ENCODE measurements at regions of chr16 and their contacts with region 1.

Region 1: DNA sequence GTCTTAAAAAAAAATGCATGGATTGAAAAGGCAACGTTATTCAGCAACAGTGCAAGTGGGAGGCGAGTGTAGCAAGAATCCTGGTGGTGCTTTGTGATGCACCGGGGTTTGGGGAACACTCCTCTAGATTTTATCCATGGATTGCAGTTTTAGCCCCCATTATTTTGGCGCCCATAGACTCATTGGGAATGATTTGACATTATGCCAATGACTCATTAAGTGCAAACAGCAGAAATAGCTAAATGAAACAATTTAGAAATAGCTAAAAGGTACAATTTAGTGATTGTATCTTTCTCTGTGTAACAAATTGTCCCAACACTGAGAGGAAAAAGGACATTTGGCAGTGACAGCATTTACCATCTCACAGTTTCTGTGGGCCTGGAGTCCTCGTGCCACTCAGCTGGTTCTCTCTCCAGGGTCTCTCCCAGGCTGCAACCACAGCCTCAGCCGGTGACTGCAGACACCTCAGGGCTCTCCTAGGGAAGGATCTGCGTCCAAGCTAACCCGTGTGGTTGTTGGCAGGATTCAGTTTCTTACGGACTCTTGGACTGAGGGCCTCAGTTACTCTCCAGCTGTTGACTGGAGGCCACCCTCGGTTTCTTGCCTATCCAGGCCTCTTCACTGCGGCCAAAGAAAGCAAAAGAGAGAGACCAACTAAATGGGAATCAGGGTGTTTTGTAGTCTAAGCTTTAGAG is 398.7 kb downstream of the SNX29 start:
- DNase-seq: peak in 1 of 10 donors; percentile 76

Region 2: GRCh38 chr16:12455287-12455798 is 80.2 kb after region 1 on chr16:
- intact Hi-C with region 1: loop called (anchors 10 kb)
- DNase-seq: peak; percentile 36 to 96 (median 70)

Measured in posterior cingulate gyrus (tissue), 11 donors.